ENCODE measurements at regions of chr2 and their contacts with region 1.

Region 1: DNA sequence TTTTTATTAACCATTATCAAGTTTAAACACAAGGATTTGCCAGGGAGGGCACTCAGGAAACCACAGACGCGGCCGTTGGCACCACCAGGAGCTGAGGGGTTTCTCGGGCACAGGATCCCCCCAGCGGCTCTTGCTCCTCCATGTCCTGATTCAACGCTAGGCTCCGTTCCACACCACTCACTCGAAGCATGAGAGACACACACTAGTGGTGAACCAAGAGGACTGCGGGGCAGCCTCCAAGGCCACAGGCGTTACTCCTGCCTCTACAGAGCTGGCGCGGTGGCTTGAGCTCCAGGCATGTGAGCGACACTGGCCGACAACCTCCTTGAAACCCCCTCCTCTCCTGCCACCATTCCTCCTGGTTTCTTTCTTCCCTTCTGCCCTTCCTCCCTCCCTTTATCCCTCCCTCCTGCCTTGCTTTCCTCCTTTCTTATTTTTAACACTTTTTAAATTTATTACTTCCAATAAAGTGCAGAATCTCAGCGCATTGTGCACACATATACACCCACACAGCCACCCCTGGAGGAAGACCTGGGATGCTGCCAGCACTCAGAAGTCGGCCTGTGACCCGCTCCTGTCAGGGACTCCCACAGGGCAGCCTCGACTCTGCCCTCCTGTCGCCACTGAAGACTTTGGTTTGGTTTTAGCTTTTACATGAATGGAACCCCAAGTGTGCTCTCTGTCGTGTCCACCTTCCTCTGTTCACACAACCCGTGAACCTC is 21.7 kb downstream of the COX7A2L start:
- DNase-seq: no peak
- ATAC-seq: no peak
- H3K4me3 ChIP-seq: no peak overlapping the region
- H3K4me3 Mint-ChIP-seq: no peak overlapping the region
- H3K27ac ChIP-seq: no peak overlapping the region
- H3K27ac Mint-ChIP-seq: peak overlapping the region; percentile 4
- H3K4me1 ChIP-seq: peaks cover 16% of the 10 kb centered on the region
- H3K4me1 Mint-ChIP-seq: peaks cover 30% of the 10 kb centered on the region
- H3K27me3 ChIP-seq: no peaks in the 10 kb centered on the region
- H3K27me3 Mint-ChIP-seq: no peaks in the 10 kb centered on the region
- CTCF ChIP-seq: no peak

Region 2: GRCh38 chr2:43519643-43520221 is 1180.4 kb after region 1 on chr2:
- CTCF ChIA-PET with region 1: no interaction called
- POLR2A ChIA-PET with region 1: no interaction called
- intact Hi-C with region 1: loop called in 1 of 2 experiments (anchors 5 kb)
- DNase-seq: peak in 1 of 14 experiments; percentile 18
- ATAC-seq: no peak
- H3K4me3 ChIP-seq: no peak overlapping the region
- H3K4me3 Mint-ChIP-seq: no peak overlapping the region
- H3K27ac ChIP-seq: no peak overlapping the region
- H3K27ac Mint-ChIP-seq: peak overlapping the region; percentile 52
- H3K4me1 ChIP-seq: no peaks in the 10 kb centered on the region
- H3K4me1 Mint-ChIP-seq: peaks cover 57% of the 10 kb centered on the region
- H3K27me3 ChIP-seq: no peaks in the 10 kb centered on the region
- H3K27me3 Mint-ChIP-seq: no peaks in the 10 kb centered on the region
- CTCF ChIP-seq: no peak